Esophagus muscularis mucosa (tissue), 4 donors: ENCODE measurements at regions of chr11 and their contacts with region 1.

Region 1: GRCh38 chr11:111299101-111300026 is 1.0 kb downstream of the POU2AF3 start:
- DNase-seq: peak; percentile 89
- H3K4me3 ChIP-seq: peak overlapping the region; percentile 65 to 71 (median 70)
- H3K27ac ChIP-seq: peak overlapping the region; percentile 78 to 89 (median 85)
- H3K4me1 ChIP-seq: peaks cover 7 to 42% (median 34%) of the 10 kb centered on the region in 4 donors
- H3K27me3 ChIP-seq: peaks cover 0 to 10% (median 0%) of the 10 kb centered on the region in 4 donors
- CTCF ChIP-seq: peak; percentile 55 to 69 (median 57)
- EP300 ChIP-seq: no peak
- POLR2A ChIP-seq: no peak

Region 2: GRCh38 chr11:111344032-111344431 is 44.7 kb after region 1 on chr11:
- intact Hi-C with region 1: no loop called
- DNase-seq: peak; percentile 91
- H3K4me3 ChIP-seq: no peak overlapping the region
- H3K27ac ChIP-seq: peak overlapping the region in 1 of 4 donors; percentile 59
- H3K4me1 ChIP-seq: peaks cover 0 to 7% (median 3%) of the 10 kb centered on the region in 4 donors
- H3K27me3 ChIP-seq: no peaks in the 10 kb centered on the region
- CTCF ChIP-seq: no peak
- EP300 ChIP-seq: no peak
- POLR2A ChIP-seq: no peak

Region 3: GRCh38 chr11:111359223-111360149 is 60.1 kb after region 1 on chr11:
- intact Hi-C with region 1: loop called (anchors 10 kb)
- DNase-seq: peak; percentile 62
- H3K4me3 ChIP-seq: no peak overlapping the region
- H3K27ac ChIP-seq: no peak overlapping the region
- H3K4me1 ChIP-seq: no peaks in the 10 kb centered on the region
- H3K27me3 ChIP-seq: no peaks in the 10 kb centered on the region
- CTCF ChIP-seq: no peak
- EP300 ChIP-seq: no peak
- POLR2A ChIP-seq: no peak

Region 4: GRCh38 chr11:111422494-111423249 is 123.3 kb after region 1 on chr11:
- intact Hi-C with region 1: loop called (anchors 5 kb)
- DNase-seq: no peak
- H3K4me3 ChIP-seq: no peak overlapping the region
- H3K27ac ChIP-seq: no peak overlapping the region
- H3K4me1 ChIP-seq: peaks cover 7 to 27% (median 25%) of the 10 kb centered on the region in 4 donors
- H3K27me3 ChIP-seq: no peaks in the 10 kb centered on the region
- CTCF ChIP-seq: peak; percentile 62 to 79 (median 70)
- EP300 ChIP-seq: no peak
- POLR2A ChIP-seq: no peak